ENCODE measurements at regions of chr7 and their contacts with region 1.

Region 1: DNA sequence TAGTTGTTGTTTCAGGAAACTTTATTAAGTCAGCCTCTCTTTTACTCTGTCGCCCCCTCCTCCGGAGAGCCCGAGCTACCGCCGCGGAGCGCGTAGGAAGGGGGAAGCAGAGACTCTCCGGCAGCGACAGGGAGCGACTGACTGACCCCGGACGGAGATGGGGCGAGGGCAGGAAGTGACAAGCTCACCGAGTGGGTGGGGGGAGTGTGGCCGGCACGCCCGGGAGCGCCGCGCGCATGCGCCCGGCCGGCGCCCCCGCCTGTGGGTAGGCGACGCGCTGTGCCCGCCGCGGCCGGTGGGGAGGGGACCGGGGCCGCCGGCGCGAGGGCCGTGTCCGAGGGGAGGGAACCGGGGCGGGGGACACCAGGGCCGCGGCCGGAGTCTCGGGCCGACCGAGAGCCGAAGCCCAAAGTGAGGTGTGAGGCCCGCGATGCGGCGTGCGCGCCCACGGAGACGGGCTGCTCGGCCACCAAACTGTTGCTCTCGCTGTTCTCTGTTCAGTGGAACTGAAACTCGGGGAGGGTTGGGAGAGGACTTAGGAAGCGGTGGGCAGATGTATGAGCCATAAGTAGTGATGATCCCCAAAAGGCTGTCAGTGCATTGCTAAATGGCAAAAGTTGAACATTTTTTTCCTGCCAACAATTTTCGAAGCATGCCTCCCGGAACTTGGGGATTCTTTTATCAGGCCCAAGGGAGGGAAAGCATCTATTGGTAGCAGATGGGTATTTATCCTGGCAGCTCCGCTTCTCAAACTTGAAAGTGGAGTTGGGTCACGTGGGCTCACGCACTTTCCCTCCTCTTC is at the start of gene ZNF800:
- DNase-seq: peak; percentile 94
- ATAC-seq: peak; percentile 99
- total RNA-seq, gene ZNF800: 20.1 TPM

Region 2: GRCh38 chr7:127066974-127067373 is 325.8 kb before region 1 on chr7:
- intact Hi-C with region 1: no loop called
- DNase-seq: no peak
- ATAC-seq: no peak

Region 3: GRCh38 chr7:127347567-127348246 is 45.1 kb before region 1 on chr7:
- intact Hi-C with region 1: loop called (anchors 10 kb)
- DNase-seq: peak; percentile 72
- ATAC-seq: peak; percentile 93

Region 4: GRCh38 chr7:127588019-127588696 is 195.4 kb after region 1 on chr7 and contains the start of gene ARF5:
- intact Hi-C with region 1: loop called (anchors 2 kb)
- DNase-seq: peak; percentile 94
- ATAC-seq: peak; percentile 94
- total RNA-seq, gene ARF5: 78.1 TPM

Region 5: DNA sequence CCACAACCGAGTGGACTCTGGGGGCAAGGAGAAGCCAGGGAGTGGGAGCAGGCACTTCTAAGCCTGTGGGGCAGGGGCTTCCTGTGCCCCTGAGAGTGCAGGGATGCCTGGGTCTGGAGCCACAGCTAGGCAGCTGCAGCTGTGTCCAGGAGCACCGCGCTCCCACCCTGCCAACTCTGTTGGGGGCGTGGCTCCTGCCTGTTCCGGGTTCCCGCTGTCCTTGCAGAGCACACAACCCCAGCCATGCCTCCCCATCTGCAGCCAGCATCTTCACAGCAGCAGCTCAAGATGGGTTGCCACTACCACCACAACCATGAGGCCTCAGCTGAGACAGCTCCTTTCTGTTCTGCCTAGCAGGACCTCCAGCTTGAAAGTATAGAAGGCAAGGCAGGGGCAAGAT is 216.5 kb after region 1 on chr7:
- intact Hi-C with region 1: no loop called
- DNase-seq: no peak
- ATAC-seq: no peak

Measured in Right ventricle myocardium inferior (tissue), 1 donor.